Heart right ventricle (tissue), 16 donors: ENCODE measurements at regions of chr5 and their contacts with region 1.

Region 1: DNA sequence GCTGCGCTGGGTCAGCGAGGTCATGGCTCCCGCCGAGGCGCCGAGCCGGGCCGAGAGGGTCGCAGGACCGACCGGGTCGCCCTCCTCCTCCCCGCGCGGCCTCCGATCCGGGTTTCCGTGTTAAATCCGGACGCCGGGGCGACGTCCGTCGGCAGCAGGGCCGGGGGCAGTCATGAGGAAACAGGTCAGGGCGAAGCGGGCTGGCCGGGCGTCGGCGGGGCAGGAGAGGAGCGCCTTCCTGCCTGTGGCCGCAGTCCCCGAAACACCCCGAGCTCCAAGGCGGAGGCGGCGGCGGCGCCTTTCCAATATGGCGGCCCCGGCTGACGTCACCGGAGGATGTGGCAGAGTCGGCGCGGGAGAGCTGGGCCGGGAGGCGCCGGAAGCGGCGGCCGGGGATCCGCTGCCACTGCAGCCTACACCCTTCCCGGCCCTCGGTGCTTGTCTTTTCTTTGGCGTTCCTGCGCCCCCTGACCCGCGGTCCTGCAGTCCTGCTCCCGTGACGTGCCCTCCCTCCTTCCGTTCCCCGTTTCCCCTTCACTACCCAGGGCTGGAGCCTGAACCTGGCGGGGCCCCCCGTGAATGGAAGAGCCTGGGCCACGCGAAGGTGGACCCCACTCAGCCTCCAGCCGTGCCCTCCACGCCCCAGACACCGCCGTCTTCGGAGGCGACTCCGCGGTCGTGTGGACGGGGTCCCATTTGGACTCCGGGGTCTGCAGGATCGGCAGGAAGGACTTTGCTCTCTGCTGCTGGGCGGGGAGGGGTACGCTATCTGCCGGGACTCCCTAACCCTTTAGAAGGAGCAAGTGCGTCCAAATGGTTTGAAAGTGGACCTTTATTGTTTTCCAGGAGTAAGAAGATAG is at the start of gene GOLPH3:
- DNase-seq: peak; percentile 95 to 96
- ATAC-seq: peak; percentile 95 to 98 (median 96)
- H3K4me3 ChIP-seq: peak within 1 kb of the TSS; percentile 74 to 98 (median 92)
- H3K27ac ChIP-seq: peak within 1 kb of the TSS; percentile 99 to 100 (median 100)
- H3K4me1 ChIP-seq: peaks cover 0 to 44% (median 30%) of the 10 kb centered on the region in 9 donors
- H3K27me3 ChIP-seq: no peaks in the 10 kb centered on the region
- CTCF ChIP-seq: peak in 3 of 9 donors; percentile 20 to 36 (median 26)
- total RNA-seq, gene GOLPH3: 33.7 to 69.5 (median 40.4) TPM

Region 2: GRCh38 chr5:32100230-32100629 is 74.0 kb before region 1 on chr5:
- intact Hi-C with region 1: loop called in 2 of 10 experiments (anchors 5 kb)
- DNase-seq: no peak
- ATAC-seq: peak in 5 of 8 donors; percentile 18 to 45 (median 31)
- H3K4me3 ChIP-seq: no peak overlapping the region
- H3K27ac ChIP-seq: peak overlapping the region in 8 of 10 donors; percentile 24 to 77 (median 67)
- H3K4me1 ChIP-seq: peaks cover 9 to 48% (median 34%) of the 10 kb centered on the region in 9 donors
- H3K27me3 ChIP-seq: no peaks in the 10 kb centered on the region
- CTCF ChIP-seq: no peak

Region 3: DNA sequence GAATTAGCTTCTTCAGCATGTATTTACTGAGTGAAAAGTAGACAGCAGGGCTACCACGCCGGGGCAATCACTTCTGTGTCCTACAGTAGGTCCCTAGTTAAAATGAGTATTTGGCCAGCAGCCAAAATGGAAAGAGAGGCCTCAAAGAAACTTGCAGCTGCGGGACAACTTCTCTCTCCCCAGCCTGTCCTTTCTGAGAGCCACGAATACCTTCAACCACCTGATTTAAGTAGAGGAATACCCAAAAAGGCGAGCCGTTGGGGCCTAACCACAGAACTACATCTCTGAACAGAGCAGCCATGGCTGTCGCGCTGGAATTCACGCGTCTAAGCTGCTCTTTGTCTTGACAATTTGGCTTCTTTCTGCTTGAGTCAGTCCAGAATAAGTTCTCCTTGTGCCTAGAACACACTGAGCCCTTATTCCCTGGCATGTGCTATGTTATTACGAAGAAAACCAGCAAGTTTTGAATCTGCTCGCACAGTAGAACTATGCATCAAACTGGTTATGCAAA is 43.7 kb after region 1 on chr5:
- intact Hi-C with region 1: loop called in 1 of 10 experiments (anchors 5 kb)
- DNase-seq: peak in 1 of 2 donors; percentile 53
- ATAC-seq: peak in 7 of 8 donors; percentile 45 to 84 (median 53)
- H3K4me3 ChIP-seq: no peak overlapping the region
- H3K27ac ChIP-seq: peak overlapping the region in 7 of 10 donors; percentile 21 to 69 (median 31)
- H3K4me1 ChIP-seq: peaks cover 0 to 14% (median 7%) of the 10 kb centered on the region in 9 donors
- H3K27me3 ChIP-seq: no peaks in the 10 kb centered on the region
- CTCF ChIP-seq: no peak